Aorta (tissue), 5 donors: ENCODE measurements at regions of chr1 and their contacts with region 1.

Region 1: GRCh38 chr1:49160677-49161076 is 384.0 kb upstream of the BEND5 start:
- DNase-seq: no peak
- ATAC-seq: no peak
- H3K4me3 ChIP-seq: no peak overlapping the region
- H3K27ac ChIP-seq: no peak overlapping the region
- H3K4me1 ChIP-seq: no peaks in the 10 kb centered on the region
- H3K27me3 ChIP-seq: no peaks in the 10 kb centered on the region

Region 2: DNA sequence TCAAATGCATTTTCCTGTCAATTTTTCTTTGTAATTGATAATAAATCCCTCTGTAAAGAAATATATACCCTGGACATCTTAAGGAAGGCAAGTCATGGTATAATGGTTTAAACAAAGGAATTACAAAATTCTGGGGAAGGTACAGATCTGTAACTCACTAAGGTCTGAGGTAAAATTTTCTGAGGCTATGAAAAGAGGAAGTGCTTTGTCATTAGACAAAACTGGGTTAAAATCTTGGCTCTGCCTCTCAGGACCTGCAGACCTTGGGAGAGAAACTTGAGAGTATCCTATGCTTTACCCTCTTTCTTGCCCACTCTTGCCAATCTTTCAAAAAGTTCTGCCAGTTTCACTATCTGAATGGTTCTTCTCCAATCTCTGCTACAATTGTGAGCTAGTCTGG is 357.2 kb before region 1 on chr1:
- intact Hi-C with region 1: no loop called
- DNase-seq: no peak
- ATAC-seq: no peak
- H3K4me3 ChIP-seq: no peak overlapping the region
- H3K27ac ChIP-seq: no peak overlapping the region
- H3K4me1 ChIP-seq: no peaks in the 10 kb centered on the region
- H3K27me3 ChIP-seq: no peaks in the 10 kb centered on the region

Region 3: DNA sequence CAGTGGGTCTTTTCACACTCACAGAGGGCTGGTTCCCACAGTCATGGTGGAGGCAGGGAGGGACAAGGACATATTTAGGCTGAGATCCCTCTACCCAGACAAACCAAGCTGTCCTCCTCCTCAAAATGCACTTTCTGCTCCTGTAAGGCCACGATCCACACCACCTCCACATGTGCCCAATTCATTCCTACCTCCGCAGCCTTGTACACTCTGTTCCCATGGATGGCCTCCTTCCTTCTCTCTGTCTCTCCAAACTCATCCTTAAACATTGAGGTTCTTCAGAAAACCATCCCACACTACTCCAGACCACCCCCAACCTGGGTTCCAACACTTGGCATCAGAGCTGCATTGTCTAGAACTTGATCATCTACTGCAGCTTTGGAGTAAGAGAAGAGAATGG is 20.4 kb after region 1 on chr1:
- intact Hi-C with region 1: loop called in 1 of 2 experiments (anchors 2 kb)
- DNase-seq: no peak
- ATAC-seq: no peak
- H3K4me3 ChIP-seq: no peak overlapping the region
- H3K27ac ChIP-seq: no peak overlapping the region
- H3K4me1 ChIP-seq: no peaks in the 10 kb centered on the region
- H3K27me3 ChIP-seq: no peaks in the 10 kb centered on the region